ENCODE measurements at regions of chr11 and their contacts with region 1.

Region 1: DNA sequence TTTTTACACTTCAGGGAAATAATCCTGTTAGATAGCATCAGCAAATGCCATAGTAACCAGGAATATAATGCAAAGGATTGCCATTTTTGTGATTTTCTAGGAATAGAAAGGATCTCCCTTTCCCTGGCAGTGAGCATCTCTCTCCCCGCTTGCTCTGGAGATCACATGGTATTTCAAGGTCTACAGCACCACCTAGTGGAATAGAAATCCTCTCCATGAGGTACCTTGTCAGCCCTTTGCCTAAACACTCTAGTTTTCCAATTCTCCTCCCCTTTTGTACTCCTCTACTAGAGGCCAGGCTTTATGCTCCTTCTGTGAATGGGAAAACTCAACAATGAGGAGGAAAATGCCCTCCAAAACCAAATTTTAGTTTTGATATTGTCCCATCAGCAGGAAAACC is 78.4 kb downstream of the XRRA1 start:
- DNase-seq: peak; percentile 57
- H3K4me3 ChIP-seq: no peak overlapping the region
- H3K27ac ChIP-seq: no peak overlapping the region
- H3K4me1 ChIP-seq: no peaks in the 10 kb centered on the region
- H3K27me3 ChIP-seq: no peaks in the 10 kb centered on the region
- CTCF ChIP-seq: peak; percentile 26 to 42

Region 2: GRCh38 chr11:74634537-74634936 is 235.9 kb before region 1 on chr11:
- CTCF ChIA-PET with region 1: no interaction called
- dilution Hi-C with region 1: no loop called
- in situ Hi-C with region 1: loop called in 1 of 2 experiments (anchors 25 kb)
- intact Hi-C with region 1: loop called (anchors 10 kb)
- DNase-seq: peak; percentile 93
- H3K4me3 ChIP-seq: no peak overlapping the region
- H3K27ac ChIP-seq: no peak overlapping the region
- H3K4me1 ChIP-seq: peaks cover 58% of the 10 kb centered on the region
- H3K27me3 ChIP-seq: no peaks in the 10 kb centered on the region
- CTCF ChIP-seq: peak; percentile 55 to 74

Region 3: GRCh38 chr11:74702383-74703007 is 168.0 kb before region 1 on chr11:
- CTCF ChIA-PET with region 1: no interaction called
- dilution Hi-C with region 1: no loop called
- in situ Hi-C with region 1: no loop called
- intact Hi-C with region 1: loop called (anchors 1 kb)
- DNase-seq: peak; percentile 41
- H3K4me3 ChIP-seq: no peak overlapping the region
- H3K27ac ChIP-seq: no peak overlapping the region
- H3K4me1 ChIP-seq: no peaks in the 10 kb centered on the region
- H3K27me3 ChIP-seq: no peaks in the 10 kb centered on the region
- CTCF ChIP-seq: peak; percentile 98 to 99

Measured in mammary epithelial cell (primary cell).